ENCODE measurements at regions of chr16 and their contacts with region 1.

Region 1: GRCh38 chr16:29961479-29962343 is at the start of gene TMEM219:
- DNase-seq: peak; percentile 91 to 98 (median 97)
- ATAC-seq: peak; percentile 98
- H3K4me3 ChIP-seq: peak within 1 kb of the TSS; percentile 80
- H3K27ac ChIP-seq: peak within 1 kb of the TSS; percentile 95
- H3K4me1 ChIP-seq: no peaks in the 10 kb centered on the region
- H3K27me3 ChIP-seq: no peaks in the 10 kb centered on the region
- total RNA-seq, gene TMEM219: 79.7 to 90.4 (median 82.1) TPM

Region 2: DNA sequence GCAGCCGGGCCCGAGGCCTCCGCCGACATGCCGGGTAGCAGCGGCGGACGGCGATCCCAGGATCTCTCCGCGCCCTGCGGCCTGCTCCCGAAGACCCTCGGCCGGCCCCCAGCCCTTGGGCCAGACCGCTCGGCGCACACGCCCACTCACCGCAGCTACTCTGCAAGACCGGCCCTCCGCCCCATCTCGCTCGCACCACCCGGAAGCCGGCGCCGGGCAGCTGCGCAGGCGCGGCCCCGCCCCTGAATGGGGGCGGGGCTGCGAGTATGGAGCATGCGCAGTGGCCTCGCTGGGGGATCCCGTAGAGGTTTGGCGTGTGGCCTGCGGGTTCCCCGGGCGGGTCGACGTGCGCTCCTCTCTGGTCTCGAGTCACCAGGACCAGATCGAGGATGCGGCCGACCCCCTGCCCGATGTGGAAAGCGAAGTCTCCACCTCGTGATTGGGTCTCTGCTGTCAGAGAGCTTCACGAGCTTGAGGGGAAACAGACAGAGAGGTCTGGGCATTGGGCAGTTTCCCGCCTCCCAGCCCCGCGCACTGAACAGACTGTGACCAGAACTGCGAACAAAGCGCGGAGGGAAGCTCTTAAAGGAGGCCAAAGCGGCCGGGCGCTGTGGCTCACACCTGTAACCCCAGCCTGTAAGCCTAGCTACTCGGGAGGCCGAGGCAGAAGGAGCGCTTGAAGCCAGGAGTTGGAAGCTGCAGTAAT is 35.6 kb before region 1 on chr16 and contains the start of gene KCTD13:
- intact Hi-C with region 1: loop called in 2 of 4 experiments (anchors 2 to 5 kb)
- DNase-seq: peak; percentile 85 to 94 (median 94)
- ATAC-seq: peak; percentile 99
- H3K4me3 ChIP-seq: peak within 1 kb of the TSS; percentile 82
- H3K27ac ChIP-seq: peak within 1 kb of the TSS; percentile 76
- H3K4me1 ChIP-seq: peaks cover 7% of the 10 kb centered on the region
- H3K27me3 ChIP-seq: no peaks in the 10 kb centered on the region
- total RNA-seq, gene KCTD13: 7.3 to 12.8 (median 9.2) TPM

Region 3: GRCh38 chr16:30010844-30011713 is 49.4 kb after region 1 on chr16 and contains the start of gene DOC2A:
- intact Hi-C with region 1: no loop called
- DNase-seq: peak in 2 of 3 donors; percentile 56 to 59
- ATAC-seq: peak in 1 of 2 donors; percentile 22
- H3K4me3 ChIP-seq: peak within 1 kb of the TSS; percentile 31
- H3K27ac ChIP-seq: no peak within 1 kb of the TSS
- H3K4me1 ChIP-seq: no peaks in the 10 kb centered on the region
- H3K27me3 ChIP-seq: no peaks in the 10 kb centered on the region
- total RNA-seq, gene DOC2A: 0.40 to 0.59 (median 0.47) TPM

Measured in right cardiac atrium (tissue), 5 donors.